Activated CD4-positive, alpha-beta memory T cell treated with anti-CD3 and anti-CD28 coated beads, Interleukin-2, amount 10 ng/mL, durations not matched to agents 7 days and 5 days (primary cell): ENCODE measurements at regions of chr2 and their contacts with region 1.

Region 1: DNA sequence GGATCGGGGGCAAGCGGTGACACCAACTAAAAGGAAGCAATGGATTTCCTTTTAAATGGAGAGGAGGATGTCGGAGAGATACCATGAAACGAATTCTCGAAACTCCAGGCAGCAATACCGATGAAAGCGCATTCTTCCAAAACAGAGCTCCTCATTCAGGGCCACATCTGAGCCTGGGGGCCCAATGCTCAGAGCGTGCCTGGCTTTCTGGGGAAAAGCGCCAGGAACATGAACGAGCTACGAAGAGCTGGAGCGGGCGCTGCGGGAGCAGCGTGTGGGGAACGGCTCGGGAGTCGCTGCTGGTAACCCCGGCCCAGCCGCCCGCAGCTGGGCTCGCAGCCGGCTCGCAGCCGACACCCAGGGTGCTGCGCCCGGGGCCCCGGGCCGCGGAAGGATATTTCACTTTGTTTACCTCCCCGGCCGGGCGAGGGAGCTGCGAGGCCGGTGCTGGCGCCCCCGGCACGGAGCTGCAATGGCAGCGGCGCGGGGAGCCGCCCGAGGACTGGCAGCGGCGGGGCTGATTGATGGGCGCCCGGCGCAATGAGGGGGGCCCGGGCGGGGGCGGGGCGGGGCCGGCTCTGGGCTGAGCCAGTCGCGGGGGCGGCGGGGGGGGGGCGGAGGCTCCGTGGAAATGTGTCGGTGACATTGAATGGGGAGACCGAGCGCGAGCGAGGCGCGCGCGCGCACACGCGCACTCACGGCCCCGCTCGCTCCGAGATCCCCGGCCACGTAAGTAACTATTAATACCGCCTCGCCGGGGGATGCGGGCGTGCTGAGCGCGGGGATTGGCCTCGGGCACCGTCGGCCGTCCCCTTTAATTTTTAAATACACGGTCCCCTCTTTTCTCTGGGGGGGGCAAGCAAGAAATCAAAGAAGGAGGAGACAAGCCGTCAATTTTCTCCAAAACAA is at the start of gene TRIB2:
- DNase-seq: peak; percentile 91
- H3K4me3 Mint-ChIP-seq: peak within 1 kb of the TSS; percentile 89
- H3K27ac Mint-ChIP-seq: peak within 1 kb of the TSS; percentile 92
- H3K4me1 Mint-ChIP-seq: peaks cover 46% of the 10 kb centered on the region
- H3K27me3 Mint-ChIP-seq: peaks cover 6% of the 10 kb centered on the region
- total RNA-seq, gene TRIB2: 62.8 to 68.3 TPM

Region 2: GRCh38 chr2:11863513-11864328 is 852.8 kb before region 1 on chr2:
- CTCF ChIA-PET with region 1: interaction called, 17 read pairs
- POLR2A ChIA-PET with region 1: interaction called, 6 read pairs
- DNase-seq: peak; percentile 67
- H3K4me3 Mint-ChIP-seq: no peak overlapping the region
- H3K27ac Mint-ChIP-seq: no peak overlapping the region
- H3K4me1 Mint-ChIP-seq: peaks cover 27% of the 10 kb centered on the region
- H3K27me3 Mint-ChIP-seq: peaks cover 9% of the 10 kb centered on the region

Region 3: DNA sequence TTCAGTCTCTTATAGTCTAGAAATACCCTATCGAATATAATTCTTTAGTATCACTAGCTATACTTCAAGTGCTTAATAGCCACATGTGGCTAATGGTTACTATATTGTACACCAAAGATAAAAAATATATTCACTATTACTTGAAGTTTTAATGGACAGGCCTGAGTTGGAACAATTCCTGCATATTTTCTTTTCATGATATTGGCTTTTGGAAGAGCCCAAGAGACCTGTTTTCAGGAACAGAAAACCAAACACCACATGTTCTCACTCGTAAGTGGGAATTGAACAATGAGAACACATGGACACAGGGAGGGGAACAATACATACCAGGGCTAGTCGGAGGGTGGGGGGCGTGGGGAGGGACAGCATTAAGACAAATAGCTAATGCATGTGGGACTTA is 334.2 kb before region 1 on chr2:
- CTCF ChIA-PET with region 1: no interaction called
- POLR2A ChIA-PET with region 1: no interaction called
- DNase-seq: no peak
- H3K4me3 Mint-ChIP-seq: no peak overlapping the region
- H3K27ac Mint-ChIP-seq: no peak overlapping the region
- H3K4me1 Mint-ChIP-seq: no peaks in the 10 kb centered on the region
- H3K27me3 Mint-ChIP-seq: peaks cover 2% of the 10 kb centered on the region

Region 4: DNA sequence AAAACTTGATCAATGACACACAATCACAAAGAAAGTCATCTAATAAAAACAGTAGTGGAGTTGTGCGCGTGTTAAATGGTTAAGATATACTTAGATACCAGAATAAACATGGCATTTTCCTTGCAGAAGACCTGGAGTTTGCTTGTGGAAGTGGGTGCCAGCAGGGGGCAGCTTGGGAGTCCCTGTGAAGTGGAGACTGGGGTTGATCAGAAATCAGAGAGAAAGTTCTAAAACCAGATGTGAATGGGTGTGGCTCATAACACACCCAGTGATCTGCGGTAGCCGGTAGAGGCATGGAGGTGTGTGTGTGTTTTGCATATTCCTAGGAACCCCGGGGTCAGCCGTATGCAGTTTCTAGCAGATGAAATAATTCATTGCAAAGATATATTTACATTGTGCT is 299.9 kb before region 1 on chr2:
- CTCF ChIA-PET with region 1: interaction called, 62 read pairs
- POLR2A ChIA-PET with region 1: interaction called, 38 read pairs
- DNase-seq: peak; percentile 77
- H3K4me3 Mint-ChIP-seq: no peak overlapping the region
- H3K27ac Mint-ChIP-seq: peak overlapping the region; percentile 33
- H3K4me1 Mint-ChIP-seq: peaks cover 57% of the 10 kb centered on the region
- H3K27me3 Mint-ChIP-seq: no peaks in the 10 kb centered on the region

Region 5: GRCh38 chr2:12456293-12457151 is 260.0 kb before region 1 on chr2:
- CTCF ChIA-PET with region 1: interaction called, 20 read pairs
- POLR2A ChIA-PET with region 1: interaction called, 14 read pairs
- DNase-seq: peak; percentile 80
- H3K4me3 Mint-ChIP-seq: peak overlapping the region; percentile 71
- H3K27ac Mint-ChIP-seq: peak overlapping the region; percentile 96
- H3K4me1 Mint-ChIP-seq: peaks cover 43% of the 10 kb centered on the region
- H3K27me3 Mint-ChIP-seq: no peaks in the 10 kb centered on the region

Region 6: DNA sequence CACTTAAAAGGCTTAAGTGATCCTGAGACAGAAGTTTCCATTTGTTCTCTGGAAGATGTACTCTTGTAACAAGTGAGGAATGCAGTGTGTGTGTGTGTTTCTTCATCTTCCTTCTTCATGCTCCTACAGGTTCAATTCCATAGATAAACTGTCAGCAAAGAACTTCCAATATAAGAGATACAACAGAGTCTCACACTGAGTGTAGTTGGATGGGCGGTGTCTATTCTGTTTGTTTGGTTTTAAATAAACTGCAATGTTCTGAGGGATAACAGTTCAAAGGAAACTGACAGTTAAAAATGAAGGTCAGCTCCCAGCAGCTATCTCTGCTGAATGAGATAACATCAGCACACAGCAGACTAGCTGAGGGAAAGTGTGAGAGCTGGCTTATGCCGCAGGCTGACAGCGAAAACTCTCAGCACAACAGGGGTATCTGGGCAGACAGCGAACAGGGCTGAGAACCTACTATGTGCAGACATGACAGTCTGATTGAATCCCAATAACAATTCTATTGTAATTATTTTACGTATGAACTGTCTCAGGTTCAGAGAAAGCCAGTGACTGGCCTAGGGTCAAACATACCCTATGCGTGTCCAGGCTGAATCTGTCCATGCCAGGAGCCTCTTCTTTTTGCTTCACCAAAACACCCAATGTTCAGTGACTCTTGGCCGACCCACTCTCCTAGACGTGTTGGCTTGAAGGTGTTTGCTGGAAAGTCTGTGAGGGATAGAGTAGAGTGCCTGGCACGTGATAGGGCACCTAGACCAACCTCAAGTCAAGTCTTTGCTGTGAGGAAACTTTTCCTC is 201.7 kb before region 1 on chr2:
- CTCF ChIA-PET with region 1: interaction called, 9 read pairs
- POLR2A ChIA-PET with region 1: interaction called, 20 read pairs
- DNase-seq: peak; percentile 65
- H3K4me3 Mint-ChIP-seq: peak overlapping the region; percentile 1
- H3K27ac Mint-ChIP-seq: peak overlapping the region; percentile 82
- H3K4me1 Mint-ChIP-seq: peaks cover 41% of the 10 kb centered on the region
- H3K27me3 Mint-ChIP-seq: peaks cover 6% of the 10 kb centered on the region

Region 7: DNA sequence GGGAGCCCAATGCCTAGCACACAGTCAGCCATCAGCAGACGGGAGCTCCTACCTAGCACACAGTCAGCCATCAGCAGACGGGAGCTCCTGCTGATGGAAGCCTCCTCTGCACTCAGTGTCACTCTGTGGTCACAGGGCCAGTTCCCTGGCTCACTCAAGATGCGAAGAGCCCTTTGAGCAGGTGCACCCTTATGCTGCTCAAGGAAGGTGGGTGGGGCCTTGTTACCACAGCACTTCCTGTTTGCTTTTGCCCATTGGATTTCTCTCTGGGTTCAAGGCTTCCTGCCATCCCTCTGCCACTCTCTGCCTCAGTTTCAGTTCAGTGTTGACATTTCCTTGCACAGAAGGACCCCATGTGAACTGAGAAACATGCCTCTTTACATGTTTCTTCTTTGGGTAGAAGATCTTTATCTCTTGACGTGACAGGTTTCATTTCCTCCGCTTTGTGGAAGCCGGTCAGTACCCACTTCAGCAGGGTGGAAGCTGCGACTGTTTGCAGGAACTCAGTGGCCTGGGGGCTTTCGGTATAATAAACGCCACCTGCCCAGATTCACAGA is 11.8 kb after region 1 on chr2:
- CTCF ChIA-PET with region 1: interaction called, 46 read pairs
- POLR2A ChIA-PET with region 1: interaction called, 42 read pairs
- DNase-seq: peak; percentile 81
- H3K4me3 Mint-ChIP-seq: peak overlapping the region; percentile 28
- H3K27ac Mint-ChIP-seq: peak overlapping the region; percentile 73
- H3K4me1 Mint-ChIP-seq: peaks cover 66% of the 10 kb centered on the region
- H3K27me3 Mint-ChIP-seq: no peaks in the 10 kb centered on the region

Region 8: GRCh38 chr2:12778369-12778768 is 61.8 kb after region 1 on chr2:
- CTCF ChIA-PET with region 1: no interaction called
- POLR2A ChIA-PET with region 1: no interaction called
- DNase-seq: no peak
- H3K4me3 Mint-ChIP-seq: no peak overlapping the region
- H3K27ac Mint-ChIP-seq: no peak overlapping the region
- H3K4me1 Mint-ChIP-seq: peaks cover 4% of the 10 kb centered on the region
- H3K27me3 Mint-ChIP-seq: peaks cover 3% of the 10 kb centered on the region